CD4-positive, alpha-beta memory T cell (primary cell): ENCODE measurements at regions of chr4 and their contacts with region 1.

Region 1: DNA sequence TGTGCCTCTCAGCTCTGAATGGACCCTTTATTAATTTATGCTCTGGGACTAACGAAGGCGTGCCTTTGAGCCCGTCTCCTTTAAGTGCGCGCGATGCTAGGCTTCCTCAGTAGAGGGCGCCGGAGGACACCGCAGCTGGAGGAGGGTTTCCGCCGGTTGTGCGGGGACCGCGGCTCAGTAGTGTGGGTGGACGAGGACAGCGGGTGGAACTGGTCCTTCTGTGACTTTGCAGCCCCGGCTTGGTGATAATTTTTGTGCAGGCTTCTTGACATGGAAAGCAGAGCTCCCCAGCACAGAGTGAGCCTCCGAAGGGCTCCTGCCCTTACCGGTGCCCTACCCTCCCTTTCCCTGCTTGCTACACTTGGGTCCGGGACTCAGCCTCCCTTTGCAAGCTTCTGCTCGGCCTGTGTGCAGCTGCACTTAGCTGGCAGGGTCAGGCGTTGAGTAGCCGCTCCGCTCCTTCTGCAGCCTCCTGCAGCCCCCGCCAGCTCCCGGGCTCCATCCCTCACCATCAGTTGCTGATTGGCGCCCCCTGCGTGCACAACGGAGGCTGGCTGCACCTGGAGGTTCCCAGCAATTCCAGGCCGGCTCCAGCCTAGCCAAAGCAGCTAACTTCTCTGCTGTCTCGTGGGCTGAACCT is 26.8 kb upstream of the BOD1L1 start:
- DNase-seq: peak; percentile 67 to 74 (median 70)
- H3K4me3 ChIP-seq: peak overlapping the region; percentile 76 to 82
- H3K4me3 Mint-ChIP-seq: peak overlapping the region; percentile 89 to 94 (median 90)
- H3K27ac ChIP-seq: no peak overlapping the region
- H3K27ac Mint-ChIP-seq: peak overlapping the region in 3 of 7 donors; percentile 49 to 74 (median 63)
- H3K4me1 ChIP-seq: peaks cover 7% of the 10 kb centered on the region
- H3K4me1 Mint-ChIP-seq: peaks cover 8 to 19% (median 11%) of the 10 kb centered on the region in 4 donors
- H3K27me3 ChIP-seq: no peaks in the 10 kb centered on the region
- H3K27me3 Mint-ChIP-seq: peaks cover 6 to 13% of the 10 kb centered on the region in 2 donors

Region 2: DNA sequence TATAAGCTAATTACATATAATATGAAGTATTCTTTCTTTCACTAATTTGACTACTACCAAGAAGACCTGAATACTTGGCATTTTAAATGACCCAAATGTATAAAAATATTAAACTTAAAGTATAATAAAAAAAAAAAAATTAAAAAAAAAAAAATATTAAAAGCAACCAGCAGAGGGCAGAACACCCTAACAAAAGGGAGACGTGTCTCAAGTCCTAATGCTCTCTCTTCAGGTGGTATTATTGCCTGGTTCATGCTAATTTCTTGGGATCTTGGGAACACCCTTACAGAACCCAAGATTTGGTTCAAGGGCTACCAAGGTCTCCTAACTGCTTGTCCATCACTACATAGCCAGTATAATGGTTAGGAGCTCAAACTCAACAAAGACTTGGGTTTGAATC is 924.9 kb before region 1 on chr4:
- CTCF ChIA-PET with region 1: no interaction called
- POLR2A ChIA-PET with region 1: no interaction called
- intact Hi-C with region 1: loop called (anchors 5 kb)
- DNase-seq: peak in 3 of 5 donors; percentile 2 to 10 (median 3)
- H3K4me3 ChIP-seq: no peak overlapping the region
- H3K4me3 Mint-ChIP-seq: no peak overlapping the region
- H3K27ac ChIP-seq: no peak overlapping the region
- H3K27ac Mint-ChIP-seq: no peak overlapping the region
- H3K4me1 ChIP-seq: no peaks in the 10 kb centered on the region
- H3K4me1 Mint-ChIP-seq: peaks cover 0 to 1% (median 0%) of the 10 kb centered on the region in 4 donors
- H3K27me3 ChIP-seq: no peaks in the 10 kb centered on the region
- H3K27me3 Mint-ChIP-seq: peaks cover 12 to 16% of the 10 kb centered on the region in 2 donors

Region 3: GRCh38 chr4:13640149-13640940 is 13.9 kb before region 1 on chr4:
- CTCF ChIA-PET with region 1: interaction called, 74 read pairs
- POLR2A ChIA-PET with region 1: interaction called, 3 read pairs
- intact Hi-C with region 1: no loop called
- DNase-seq: no peak
- H3K4me3 ChIP-seq: no peak overlapping the region
- H3K4me3 Mint-ChIP-seq: no peak overlapping the region
- H3K27ac ChIP-seq: no peak overlapping the region
- H3K27ac Mint-ChIP-seq: no peak overlapping the region
- H3K4me1 ChIP-seq: no peaks in the 10 kb centered on the region
- H3K4me1 Mint-ChIP-seq: no peaks in the 10 kb centered on the region
- H3K27me3 ChIP-seq: no peaks in the 10 kb centered on the region
- H3K27me3 Mint-ChIP-seq: peaks cover 24 to 35% of the 10 kb centered on the region in 2 donors

Region 4: DNA sequence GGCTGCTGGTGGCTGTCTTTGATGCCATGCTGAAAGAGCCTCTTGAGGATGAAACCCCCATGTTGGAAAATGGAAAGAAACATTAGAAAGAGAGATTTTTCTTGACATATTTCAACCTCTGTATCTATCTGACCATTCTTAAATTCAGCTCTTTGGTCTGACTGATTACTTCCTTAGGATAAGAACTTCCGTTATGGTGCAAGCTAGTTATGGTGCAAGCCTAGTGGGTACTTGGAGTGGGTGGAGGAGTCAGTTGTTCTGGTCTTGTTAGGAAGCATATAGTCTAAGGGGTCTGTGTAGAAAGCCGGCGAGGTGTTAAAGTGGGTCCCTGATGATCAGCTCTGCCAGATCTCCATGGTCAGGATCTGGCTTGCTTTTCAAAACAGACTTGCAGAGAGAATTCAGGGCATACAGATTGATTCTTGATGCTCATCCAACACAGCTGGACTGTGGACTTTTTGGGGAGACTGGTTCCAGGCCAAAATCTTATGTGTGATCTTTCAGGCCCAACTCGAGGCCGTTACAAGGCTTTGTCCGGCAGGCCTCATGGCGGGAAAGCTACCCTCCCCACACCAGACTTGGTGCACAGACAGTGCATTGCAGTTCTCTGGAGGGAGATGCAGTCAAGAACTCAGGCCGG is 56.1 kb after region 1 on chr4:
- CTCF ChIA-PET with region 1: no interaction called
- POLR2A ChIA-PET with region 1: no interaction called
- intact Hi-C with region 1: no loop called
- DNase-seq: no peak
- H3K4me3 ChIP-seq: no peak overlapping the region
- H3K4me3 Mint-ChIP-seq: no peak overlapping the region
- H3K27ac ChIP-seq: no peak overlapping the region
- H3K27ac Mint-ChIP-seq: no peak overlapping the region
- H3K4me1 ChIP-seq: no peaks in the 10 kb centered on the region
- H3K4me1 Mint-ChIP-seq: no peaks in the 10 kb centered on the region
- H3K27me3 ChIP-seq: no peaks in the 10 kb centered on the region
- H3K27me3 Mint-ChIP-seq: peaks cover 7 to 9% of the 10 kb centered on the region in 2 donors

Region 5: DNA sequence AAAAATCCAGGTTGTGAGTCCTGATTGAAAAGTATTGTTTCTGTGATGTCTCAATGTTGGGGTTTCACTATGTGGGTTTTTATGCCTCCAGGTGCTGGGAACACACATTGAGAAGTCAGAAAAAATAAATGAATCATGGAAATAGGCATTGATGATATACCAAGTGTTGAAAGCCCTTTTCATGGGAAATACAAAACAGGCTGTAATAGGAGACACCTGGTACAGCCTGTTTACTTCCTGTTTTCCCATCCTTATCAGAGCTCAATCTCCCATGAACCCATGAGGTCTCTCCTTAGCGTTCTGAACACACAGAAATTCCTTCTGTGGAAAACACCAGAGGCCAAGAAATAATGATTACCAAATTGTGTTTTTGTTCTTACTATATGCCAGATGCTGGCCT is 79.5 kb after region 1 on chr4:
- CTCF ChIA-PET with region 1: no interaction called
- POLR2A ChIA-PET with region 1: no interaction called
- intact Hi-C with region 1: no loop called
- DNase-seq: no peak
- H3K4me3 ChIP-seq: no peak overlapping the region
- H3K4me3 Mint-ChIP-seq: no peak overlapping the region
- H3K27ac ChIP-seq: no peak overlapping the region
- H3K27ac Mint-ChIP-seq: no peak overlapping the region
- H3K4me1 ChIP-seq: no peaks in the 10 kb centered on the region
- H3K4me1 Mint-ChIP-seq: no peaks in the 10 kb centered on the region
- H3K27me3 ChIP-seq: no peaks in the 10 kb centered on the region
- H3K27me3 Mint-ChIP-seq: peaks cover 4% of the 10 kb centered on the region in 2 donors

Region 6: GRCh38 chr4:14254252-14254651 is 600.0 kb after region 1 on chr4:
- CTCF ChIA-PET with region 1: no interaction called
- POLR2A ChIA-PET with region 1: no interaction called
- intact Hi-C with region 1: loop called (anchors 2 kb)
- DNase-seq: no peak
- H3K4me3 ChIP-seq: no peak overlapping the region
- H3K4me3 Mint-ChIP-seq: no peak overlapping the region
- H3K27ac ChIP-seq: no peak overlapping the region
- H3K27ac Mint-ChIP-seq: no peak overlapping the region
- H3K4me1 ChIP-seq: no peaks in the 10 kb centered on the region
- H3K4me1 Mint-ChIP-seq: no peaks in the 10 kb centered on the region
- H3K27me3 ChIP-seq: no peaks in the 10 kb centered on the region
- H3K27me3 Mint-ChIP-seq: no peaks in the 10 kb centered on the region

Region 7: GRCh38 chr4:14646831-14647230 is 992.6 kb after region 1 on chr4:
- CTCF ChIA-PET with region 1: no interaction called
- POLR2A ChIA-PET with region 1: no interaction called
- intact Hi-C with region 1: no loop called
- DNase-seq: no peak
- H3K4me3 ChIP-seq: no peak overlapping the region
- H3K4me3 Mint-ChIP-seq: no peak overlapping the region
- H3K27ac ChIP-seq: no peak overlapping the region
- H3K27ac Mint-ChIP-seq: no peak overlapping the region
- H3K4me1 ChIP-seq: no peaks in the 10 kb centered on the region
- H3K4me1 Mint-ChIP-seq: no peaks in the 10 kb centered on the region
- H3K27me3 ChIP-seq: no peaks in the 10 kb centered on the region
- H3K27me3 Mint-ChIP-seq: no peaks in the 10 kb centered on the region

Region 8: DNA sequence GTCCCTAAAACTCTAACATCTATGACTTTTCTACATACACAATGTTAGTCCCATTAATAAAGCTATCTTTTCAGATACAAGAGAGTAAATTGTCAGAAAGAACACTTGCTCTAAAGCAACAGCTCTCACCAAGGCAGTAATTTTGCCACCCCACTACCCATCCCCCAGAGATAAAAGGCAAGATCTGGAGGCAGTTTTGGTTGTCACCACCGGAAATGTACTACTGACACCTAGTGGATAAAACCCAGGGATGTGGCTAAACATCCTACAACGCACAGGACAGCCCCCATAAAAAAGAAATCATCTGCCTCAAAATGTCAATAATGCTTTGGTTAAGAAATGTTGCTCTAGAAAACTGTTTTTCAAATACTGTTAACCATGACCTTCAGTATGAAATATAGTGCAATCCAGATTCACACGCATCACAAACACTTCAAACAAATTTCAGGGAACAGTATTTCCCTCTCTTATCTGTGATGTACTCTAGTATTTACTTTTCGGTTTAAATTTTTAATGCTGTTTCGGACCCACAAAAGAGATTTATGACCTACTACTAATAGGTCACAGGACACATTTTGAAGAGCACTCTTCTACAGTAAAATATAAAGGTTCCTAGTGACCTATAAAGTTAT is 1995.8 kb after region 1 on chr4:
- CTCF ChIA-PET with region 1: interaction called, 3 read pairs
- POLR2A ChIA-PET with region 1: no interaction called
- intact Hi-C with region 1: loop called (anchors 1 kb)
- DNase-seq: peak; percentile 74 to 81 (median 75)
- H3K4me3 ChIP-seq: no peak overlapping the region
- H3K4me3 Mint-ChIP-seq: peak overlapping the region in 7 of 8 donors; percentile 1 to 75 (median 36)
- H3K27ac ChIP-seq: no peak overlapping the region
- H3K27ac Mint-ChIP-seq: peak overlapping the region in 6 of 7 donors; percentile 7 to 69 (median 38)
- H3K4me1 ChIP-seq: peaks cover 80% of the 10 kb centered on the region
- H3K4me1 Mint-ChIP-seq: peaks cover 43 to 80% (median 56%) of the 10 kb centered on the region in 4 donors
- H3K27me3 ChIP-seq: no peaks in the 10 kb centered on the region
- H3K27me3 Mint-ChIP-seq: no peaks in the 10 kb centered on the region